Activated naive CD4-positive, alpha-beta T cell treated with anti-CD3 and anti-CD28 coated beads, Interleukin-2, amount 10 ng/mL, durations not matched to agents 7 days and 5 days (primary cell): ENCODE measurements at regions of chr13 and their contacts with region 1.

Region 1: DNA sequence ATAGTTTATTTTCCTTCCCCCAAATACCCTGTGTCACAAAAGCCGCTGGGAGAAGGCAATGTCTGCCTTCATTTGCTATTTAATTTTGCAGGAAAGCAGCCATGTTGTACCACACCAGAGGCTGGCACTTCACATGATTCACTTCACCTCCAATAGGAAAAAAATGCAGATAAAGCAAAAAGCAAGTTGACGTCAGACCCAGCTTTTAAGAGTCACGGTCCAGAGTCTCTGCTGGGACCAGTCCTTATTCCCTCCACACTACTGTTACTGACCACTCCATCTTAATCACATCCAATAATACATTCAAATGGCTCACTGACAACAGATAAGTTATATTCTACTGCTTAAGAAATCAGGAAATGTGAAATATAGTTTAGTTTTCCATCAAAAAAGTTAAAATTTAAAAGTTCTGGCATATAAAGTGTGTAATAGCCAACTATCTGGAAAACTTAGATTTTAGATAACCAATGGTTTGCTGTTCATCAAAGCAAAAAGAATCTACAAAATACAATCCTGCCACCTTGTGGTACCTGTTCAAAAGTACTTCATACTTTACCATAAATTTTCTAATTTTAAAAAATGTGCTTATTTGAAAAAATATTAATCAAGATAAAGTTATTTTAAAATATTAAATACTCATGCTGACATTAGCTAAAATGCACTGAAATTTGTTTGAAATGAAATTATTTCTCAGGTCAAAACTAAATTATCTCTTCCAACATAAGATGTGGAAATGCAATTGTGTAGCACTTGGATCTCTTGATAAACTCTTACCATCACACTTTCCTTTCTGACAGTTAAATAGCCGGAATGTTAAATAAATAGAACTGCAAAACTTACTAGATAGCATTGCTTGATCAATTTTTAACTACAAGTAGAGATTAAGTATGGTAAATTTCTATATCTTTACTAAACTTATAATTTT is 97.3 kb downstream of the SERP2 start:
- DNase-seq: no peak
- H3K4me3 Mint-ChIP-seq: no peak overlapping the region
- H3K27ac Mint-ChIP-seq: no peak overlapping the region
- H3K4me1 Mint-ChIP-seq: no peaks in the 10 kb centered on the region
- H3K27me3 Mint-ChIP-seq: no peaks in the 10 kb centered on the region

Region 2: DNA sequence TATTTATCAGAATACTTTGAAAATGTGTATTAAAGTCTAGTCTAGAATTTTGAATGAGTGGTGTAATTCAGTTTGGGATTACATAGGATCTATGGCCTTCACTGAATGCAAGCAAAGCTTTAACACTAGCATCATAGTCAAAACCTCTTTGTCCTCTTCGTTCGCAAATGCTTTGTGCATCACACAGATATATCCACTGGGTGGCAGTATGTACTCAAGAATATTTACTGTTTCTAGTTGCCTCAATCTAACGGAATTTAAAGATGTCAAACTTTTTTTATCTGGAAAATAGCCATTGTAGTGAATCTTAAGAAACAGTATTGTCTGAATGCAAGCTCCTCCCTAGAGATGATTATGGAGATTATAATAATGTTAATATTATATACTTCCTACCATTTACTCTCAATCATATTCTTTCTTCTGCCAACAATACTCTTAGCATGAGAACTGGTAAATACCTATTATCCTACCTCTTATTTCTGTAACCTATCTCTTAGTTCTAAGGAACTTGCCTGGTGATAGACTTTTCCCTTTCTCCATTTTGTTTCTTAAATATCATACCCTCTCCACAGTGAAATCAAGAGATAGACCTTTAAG is 565.4 kb before region 1 on chr13:
- CTCF ChIA-PET with region 1: interaction called, 33 read pairs
- DNase-seq: peak; percentile 29
- H3K4me3 Mint-ChIP-seq: no peak overlapping the region
- H3K27ac Mint-ChIP-seq: no peak overlapping the region
- H3K4me1 Mint-ChIP-seq: no peaks in the 10 kb centered on the region
- H3K27me3 Mint-ChIP-seq: peaks cover 17% of the 10 kb centered on the region

Region 3: DNA sequence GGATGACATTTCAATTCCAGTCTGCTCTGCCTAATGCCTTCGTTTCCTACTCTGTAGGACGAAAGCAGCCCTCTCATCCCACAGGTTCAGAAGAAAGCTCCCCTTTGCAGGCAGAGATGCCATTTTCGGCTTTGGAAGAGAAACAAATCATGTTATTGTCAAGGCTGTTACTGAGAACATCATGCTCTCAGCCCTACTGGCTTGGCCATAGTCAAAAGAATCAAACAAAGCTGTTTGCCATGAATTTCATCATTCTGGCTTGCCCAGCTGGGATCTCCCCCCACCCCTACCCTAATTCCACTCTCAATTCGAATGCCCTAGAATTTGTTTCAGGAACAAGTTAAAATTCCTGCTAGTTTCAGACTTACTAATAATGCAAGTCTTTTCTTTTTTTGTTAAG is 259.6 kb before region 1 on chr13:
- CTCF ChIA-PET with region 1: no interaction called
- DNase-seq: no peak
- H3K4me3 Mint-ChIP-seq: no peak overlapping the region
- H3K27ac Mint-ChIP-seq: no peak overlapping the region
- H3K4me1 Mint-ChIP-seq: no peaks in the 10 kb centered on the region
- H3K27me3 Mint-ChIP-seq: peaks cover 27% of the 10 kb centered on the region

Region 4: DNA sequence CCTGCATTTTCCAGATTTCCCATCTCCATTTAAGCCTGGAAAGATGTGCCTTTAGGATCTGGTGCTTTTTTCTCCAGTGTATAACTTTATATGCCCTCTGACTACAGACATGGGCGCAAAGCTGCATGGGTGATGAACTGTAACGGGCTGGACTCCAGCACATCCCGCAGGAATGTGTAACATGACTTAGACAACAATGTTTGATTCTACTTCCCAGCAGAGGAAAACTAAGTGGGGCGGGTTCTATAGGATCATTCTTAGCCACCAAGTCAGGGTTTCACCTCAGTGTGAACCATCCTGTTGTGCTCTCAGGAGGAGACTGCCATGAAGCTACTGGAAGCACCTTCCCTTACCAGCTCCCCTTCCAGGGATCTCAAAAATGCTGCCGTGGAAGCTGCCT is 190.4 kb before region 1 on chr13:
- CTCF ChIA-PET with region 1: no interaction called
- DNase-seq: no peak
- H3K4me3 Mint-ChIP-seq: no peak overlapping the region
- H3K27ac Mint-ChIP-seq: no peak overlapping the region
- H3K4me1 Mint-ChIP-seq: peaks cover 25% of the 10 kb centered on the region
- H3K27me3 Mint-ChIP-seq: peaks cover 27% of the 10 kb centered on the region